Gastrocnemius medialis (tissue), 4 donors: ENCODE measurements at regions of chr1 and their contacts with region 1.

Region 1: DNA sequence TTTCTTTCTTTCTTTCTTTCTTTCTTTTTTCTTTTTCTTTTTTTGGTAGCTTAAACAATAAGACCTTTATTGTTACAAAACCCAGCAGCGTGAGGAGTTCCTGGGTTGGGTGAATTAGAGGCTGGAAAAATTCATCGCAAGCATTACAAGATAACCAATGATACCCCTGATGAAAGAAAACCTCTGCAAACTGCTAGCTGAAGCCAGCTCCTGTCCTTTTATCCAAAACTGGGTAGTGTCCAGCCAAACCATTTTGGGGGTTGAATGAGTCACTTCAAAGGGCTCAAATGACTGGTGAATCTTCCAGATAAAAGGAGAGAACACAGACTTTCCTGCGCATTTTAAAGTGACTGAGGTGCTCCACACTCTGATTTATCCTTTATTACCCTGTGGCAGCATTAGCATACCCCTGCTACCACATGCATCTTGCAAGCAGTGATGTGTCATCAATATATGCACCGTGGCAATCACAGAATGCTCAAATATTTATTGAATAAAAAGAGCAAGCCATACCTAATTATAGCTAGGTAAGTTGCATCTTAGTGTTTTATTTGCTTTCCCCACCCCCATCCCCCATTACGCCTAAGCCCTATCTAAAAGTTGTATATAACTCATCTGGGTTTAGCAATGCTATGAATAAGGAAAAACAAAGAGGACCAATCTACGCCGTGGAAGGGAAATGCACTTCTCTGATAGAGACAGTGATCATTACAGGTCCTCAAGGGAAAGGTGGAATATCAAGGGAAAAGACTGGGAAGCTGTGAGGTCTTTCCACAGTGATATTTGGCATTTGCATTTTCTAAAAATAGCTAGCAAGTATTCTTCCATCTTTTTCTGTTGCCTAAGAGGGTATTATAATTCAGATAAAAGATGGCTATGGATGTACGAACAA is 32.4 kb upstream of the CEP350 start:
- DNase-seq: no peak
- ATAC-seq: no peak
- H3K4me3 ChIP-seq: no peak overlapping the region
- H3K27ac ChIP-seq: no peak overlapping the region
- H3K4me1 ChIP-seq: no peaks in the 10 kb centered on the region
- H3K27me3 ChIP-seq: no peaks in the 10 kb centered on the region
- CTCF ChIP-seq: no peak
- POLR2A ChIP-seq: no peak

Region 2: GRCh38 chr1:178802873-178803272 is 1119.4 kb before region 1 on chr1:
- in situ Hi-C with region 1: no loop called
- intact Hi-C with region 1: no loop called
- DNase-seq: no peak
- ATAC-seq: no peak
- H3K4me3 ChIP-seq: no peak overlapping the region
- H3K27ac ChIP-seq: no peak overlapping the region
- H3K4me1 ChIP-seq: no peaks in the 10 kb centered on the region
- H3K27me3 ChIP-seq: no peaks in the 10 kb centered on the region
- CTCF ChIP-seq: no peak
- POLR2A ChIP-seq: no peak

Region 3: DNA sequence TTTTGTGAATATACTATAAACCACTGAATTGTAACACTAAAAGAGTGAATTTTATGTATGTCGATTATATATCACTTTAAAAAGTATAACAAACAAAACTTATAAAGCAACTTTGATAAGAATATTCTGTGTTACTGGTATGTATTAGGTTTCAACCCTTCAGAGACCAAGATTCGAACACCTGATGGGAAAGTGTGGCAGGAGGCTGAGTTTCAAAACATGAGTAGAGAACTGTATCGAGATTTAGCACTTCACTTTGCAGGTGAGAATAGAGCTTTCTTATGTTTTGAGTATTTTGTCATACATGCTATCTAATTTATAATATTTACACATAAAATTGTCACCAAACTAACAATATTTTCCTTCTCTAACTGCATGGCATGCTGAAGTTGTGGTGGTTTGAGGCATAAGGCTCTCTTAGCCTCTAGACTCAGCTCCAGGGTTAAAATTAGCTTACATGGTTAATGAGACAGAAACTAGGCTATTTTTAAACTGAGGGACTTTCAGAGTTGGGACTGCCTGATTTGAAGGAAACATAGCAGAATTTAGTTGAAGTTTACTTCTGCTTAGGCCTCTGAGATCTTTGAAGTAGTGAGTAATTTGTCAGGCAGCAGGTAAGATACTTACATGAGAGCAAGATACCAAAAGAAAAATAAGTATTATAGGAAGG is 80.9 kb after region 1 on chr1:
- in situ Hi-C with region 1: loop called in 1 of 4 experiments (anchors 25 kb)
- intact Hi-C with region 1: no loop called
- DNase-seq: no peak
- ATAC-seq: peak in 1 of 2 donors; percentile 36
- H3K4me3 ChIP-seq: no peak overlapping the region
- H3K27ac ChIP-seq: peak overlapping the region; percentile 42 to 59 (median 48)
- H3K4me1 ChIP-seq: peaks cover 22 to 24% of the 10 kb centered on the region in 2 donors
- H3K27me3 ChIP-seq: no peaks in the 10 kb centered on the region
- CTCF ChIP-seq: no peak
- POLR2A ChIP-seq: no peak

Region 4: GRCh38 chr1:180040034-180040433 is 117.8 kb after region 1 on chr1:
- in situ Hi-C with region 1: loop called in 1 of 4 experiments (anchors 25 kb)
- intact Hi-C with region 1: no loop called
- DNase-seq: no peak
- ATAC-seq: no peak
- H3K4me3 ChIP-seq: no peak overlapping the region
- H3K27ac ChIP-seq: no peak overlapping the region
- H3K4me1 ChIP-seq: no peaks in the 10 kb centered on the region
- H3K27me3 ChIP-seq: no peaks in the 10 kb centered on the region
- CTCF ChIP-seq: no peak
- POLR2A ChIP-seq: no peak

Region 5: GRCh38 chr1:180080433-180080832 is 158.2 kb after region 1 on chr1:
- in situ Hi-C with region 1: loop called in 1 of 4 experiments (anchors 25 kb)
- intact Hi-C with region 1: no loop called
- DNase-seq: no peak
- ATAC-seq: peak; percentile 58 to 87
- H3K4me3 ChIP-seq: no peak overlapping the region
- H3K27ac ChIP-seq: peak overlapping the region in 3 of 4 donors; percentile 19 to 57 (median 35)
- H3K4me1 ChIP-seq: no peaks in the 10 kb centered on the region
- H3K27me3 ChIP-seq: no peaks in the 10 kb centered on the region
- CTCF ChIP-seq: no peak
- POLR2A ChIP-seq: no peak